B cell (primary cell): ENCODE measurements at regions of chr12 and their contacts with region 1.

Region 1: GRCh38 chr12:48618541-48618940 is 48.7 kb upstream of the LALBA start:
- DNase-seq: peak; percentile 79
- ATAC-seq: peak; percentile 90
- H3K4me3 ChIP-seq: no peak overlapping the region
- H3K4me3 Mint-ChIP-seq: no peak overlapping the region
- H3K27ac ChIP-seq: no peak overlapping the region
- H3K27ac Mint-ChIP-seq: no peak overlapping the region
- H3K4me1 ChIP-seq: no peaks in the 10 kb centered on the region
- H3K4me1 Mint-ChIP-seq: no peaks in the 10 kb centered on the region
- H3K27me3 ChIP-seq: peaks cover 0 to 11% (median 8%) of the 10 kb centered on the region in 4 experiments
- H3K27me3 Mint-ChIP-seq: peaks cover 45% of the 10 kb centered on the region
- CTCF ChIP-seq: peak; percentile 97

Region 2: GRCh38 chr12:48286665-48287064 is 331.9 kb before region 1 on chr12:
- CTCF ChIA-PET with region 1: interaction called, 12 read pairs
- POLR2A ChIA-PET with region 1: no interaction called
- intact Hi-C with region 1: no loop called
- DNase-seq: peak; percentile 9
- ATAC-seq: no peak
- H3K4me3 ChIP-seq: no peak overlapping the region
- H3K4me3 Mint-ChIP-seq: no peak overlapping the region
- H3K27ac ChIP-seq: no peak overlapping the region
- H3K27ac Mint-ChIP-seq: no peak overlapping the region
- H3K4me1 ChIP-seq: peaks cover 0 to 5% of the 10 kb centered on the region in 2 donors
- H3K4me1 Mint-ChIP-seq: peaks cover 10% of the 10 kb centered on the region
- H3K27me3 ChIP-seq: peaks cover 0 to 4% (median 2%) of the 10 kb centered on the region in 4 experiments
- H3K27me3 Mint-ChIP-seq: peaks cover 40% of the 10 kb centered on the region
- CTCF ChIP-seq: peak; percentile 30

Region 3: DNA sequence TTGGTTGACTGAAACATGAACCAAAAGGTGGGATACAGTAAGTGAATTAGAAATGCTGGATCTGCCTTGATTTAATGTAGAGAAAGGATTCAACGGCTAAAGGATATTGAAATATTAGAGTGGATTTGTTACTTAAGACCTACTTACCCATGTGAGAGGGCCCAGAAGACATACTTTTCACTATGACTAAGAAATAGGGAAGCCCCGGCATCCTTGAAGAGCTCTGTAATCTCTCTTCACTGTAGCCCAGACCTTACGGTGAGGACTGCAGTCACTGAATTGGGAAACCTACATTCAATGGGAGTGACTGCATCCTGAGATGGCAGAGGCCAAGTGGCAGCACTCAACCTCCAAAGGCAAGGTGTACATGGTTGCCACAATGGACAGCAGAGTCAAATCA is 11.0 kb after region 1 on chr12:
- CTCF ChIA-PET with region 1: interaction called, 10 read pairs
- POLR2A ChIA-PET with region 1: no interaction called
- intact Hi-C with region 1: no loop called
- DNase-seq: no peak
- ATAC-seq: no peak
- H3K4me3 ChIP-seq: no peak overlapping the region
- H3K4me3 Mint-ChIP-seq: no peak overlapping the region
- H3K27ac ChIP-seq: no peak overlapping the region
- H3K27ac Mint-ChIP-seq: no peak overlapping the region
- H3K4me1 ChIP-seq: no peaks in the 10 kb centered on the region
- H3K4me1 Mint-ChIP-seq: no peaks in the 10 kb centered on the region
- H3K27me3 ChIP-seq: peaks cover 0 to 15% (median 1%) of the 10 kb centered on the region in 4 experiments
- H3K27me3 Mint-ChIP-seq: peaks cover 43% of the 10 kb centered on the region
- CTCF ChIP-seq: no peak

Region 4: DNA sequence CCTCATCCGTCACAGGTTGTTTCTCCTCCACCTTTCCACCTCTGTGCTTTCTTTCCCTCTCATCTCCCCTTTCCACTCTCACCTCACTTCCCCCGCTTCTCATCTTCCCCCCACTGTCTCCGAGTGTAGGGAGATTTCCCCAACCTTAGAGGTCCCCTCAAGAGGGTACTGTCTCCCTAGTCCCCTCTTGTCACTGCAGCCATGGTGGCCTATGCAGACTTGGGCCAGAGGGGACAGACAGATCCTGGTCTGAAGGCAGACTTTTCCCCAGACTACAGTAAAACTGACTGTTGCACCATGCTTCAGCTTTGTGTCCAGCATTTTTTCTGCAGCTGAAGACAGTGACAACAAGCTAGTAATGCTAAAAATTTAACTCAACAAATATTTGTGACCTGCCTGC is 22.3 kb after region 1 on chr12:
- CTCF ChIA-PET with region 1: no interaction called
- POLR2A ChIA-PET with region 1: no interaction called
- intact Hi-C with region 1: no loop called
- DNase-seq: no peak
- ATAC-seq: no peak
- H3K4me3 ChIP-seq: no peak overlapping the region
- H3K4me3 Mint-ChIP-seq: no peak overlapping the region
- H3K27ac ChIP-seq: no peak overlapping the region
- H3K27ac Mint-ChIP-seq: no peak overlapping the region
- H3K4me1 ChIP-seq: no peaks in the 10 kb centered on the region
- H3K4me1 Mint-ChIP-seq: no peaks in the 10 kb centered on the region
- H3K27me3 ChIP-seq: no peaks in the 10 kb centered on the region
- H3K27me3 Mint-ChIP-seq: no peaks in the 10 kb centered on the region
- CTCF ChIP-seq: no peak

Region 5: GRCh38 chr12:48690990-48691389 is 72.4 kb after region 1 on chr12:
- CTCF ChIA-PET with region 1: no interaction called
- POLR2A ChIA-PET with region 1: no interaction called
- intact Hi-C with region 1: no loop called
- DNase-seq: no peak
- ATAC-seq: no peak
- H3K4me3 ChIP-seq: no peak overlapping the region
- H3K4me3 Mint-ChIP-seq: no peak overlapping the region
- H3K27ac ChIP-seq: no peak overlapping the region
- H3K27ac Mint-ChIP-seq: no peak overlapping the region
- H3K4me1 ChIP-seq: no peaks in the 10 kb centered on the region
- H3K4me1 Mint-ChIP-seq: no peaks in the 10 kb centered on the region
- H3K27me3 ChIP-seq: no peaks in the 10 kb centered on the region
- H3K27me3 Mint-ChIP-seq: no peaks in the 10 kb centered on the region
- CTCF ChIP-seq: no peak